Dendritic cell treated with granulocyte-macrophage colony-stimulating factor and Interleukin-4, amounts not matched to agents 40 ng/mL and 50 ng/mL, for 4 days (primary cell): ENCODE measurements at regions of chr15 and their contacts with region 1.

Region 1: DNA sequence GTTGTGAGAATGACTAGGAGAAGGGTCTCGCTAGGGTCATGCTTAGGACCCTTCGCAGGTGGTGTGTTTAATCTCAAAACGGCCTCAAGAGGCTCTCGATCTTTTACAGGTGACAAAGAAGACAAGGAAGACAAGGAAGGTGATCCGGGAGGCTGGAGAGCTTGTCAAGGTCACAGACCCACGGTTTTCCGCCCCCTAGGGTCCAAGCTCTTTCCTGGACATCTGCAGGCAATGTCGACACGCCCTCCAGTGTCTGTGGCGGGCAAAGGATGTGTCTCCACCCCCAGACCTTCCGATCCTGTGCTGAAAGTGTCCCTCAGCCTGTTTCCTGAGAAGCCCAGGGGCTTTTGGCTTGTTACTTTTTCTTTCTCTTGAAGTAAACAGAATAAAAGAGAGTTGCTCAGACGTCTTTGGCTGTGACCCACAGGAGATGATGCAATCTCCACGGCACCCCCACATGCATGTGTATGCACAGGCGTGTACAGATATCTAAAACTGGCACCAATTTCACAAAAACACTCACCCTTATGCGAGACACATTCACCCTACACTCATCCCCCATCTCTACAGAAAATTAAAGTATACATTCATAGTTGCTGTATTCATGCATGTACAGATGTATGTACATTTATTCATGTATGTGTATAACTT is 108.8 kb downstream of the KLF13 start:
- H3K4me3 Mint-ChIP-seq: peak overlapping the region; percentile 65
- H3K27ac Mint-ChIP-seq: peak overlapping the region; percentile 94
- H3K4me1 Mint-ChIP-seq: peaks cover 83% of the 10 kb centered on the region
- H3K27me3 Mint-ChIP-seq: no peaks in the 10 kb centered on the region

Region 2: DNA sequence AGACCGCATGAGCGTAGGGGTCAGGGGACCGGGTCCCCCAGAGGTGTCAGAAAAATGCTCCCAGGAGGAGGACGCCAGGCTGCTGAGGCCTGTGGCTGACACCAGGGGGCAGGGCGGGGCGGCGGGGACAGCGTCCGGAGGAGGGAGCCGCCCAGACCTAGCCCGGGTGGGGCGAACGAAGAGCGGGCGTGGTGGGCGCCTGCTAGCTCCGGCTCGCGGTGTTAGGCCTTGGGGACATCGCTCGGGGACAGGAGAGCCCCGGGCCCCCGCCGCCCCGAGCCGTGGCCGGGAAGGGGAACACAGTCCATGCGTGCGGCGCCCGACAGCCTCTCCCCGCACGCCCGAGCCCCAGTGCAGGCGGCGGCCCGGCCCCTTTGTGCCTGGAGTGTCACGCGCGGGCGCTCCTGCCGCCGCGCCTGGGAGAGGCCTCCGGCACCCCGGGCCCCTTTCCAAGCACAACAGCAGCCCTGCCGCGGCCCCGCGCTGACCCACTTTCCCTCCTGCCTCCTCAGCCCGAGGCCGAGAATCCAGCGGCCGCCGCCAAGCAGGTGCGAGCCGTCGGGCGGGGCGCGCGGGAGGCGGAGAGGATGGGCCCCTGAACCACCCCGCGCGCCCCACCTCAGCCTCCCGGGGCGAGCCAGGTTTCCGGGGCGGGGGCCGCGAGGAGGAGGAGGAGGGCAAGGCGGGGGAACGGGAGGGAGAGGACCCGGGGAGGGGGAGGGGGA is 219.7 kb before region 1 on chr15:
- intact Hi-C with region 1: loop called (anchors 5 kb)
- H3K4me3 Mint-ChIP-seq: peak overlapping the region; percentile 86
- H3K27ac Mint-ChIP-seq: peak overlapping the region; percentile 97
- H3K4me1 Mint-ChIP-seq: peaks cover 71% of the 10 kb centered on the region
- H3K27me3 Mint-ChIP-seq: no peaks in the 10 kb centered on the region

Region 3: GRCh38 chr15:31263751-31264558 is 171.4 kb before region 1 on chr15:
- intact Hi-C with region 1: loop called (anchors 5 kb)
- H3K4me3 Mint-ChIP-seq: peak overlapping the region; percentile 17
- H3K27ac Mint-ChIP-seq: peak overlapping the region; percentile 95
- H3K4me1 Mint-ChIP-seq: peaks cover 100% of the 10 kb centered on the region
- H3K27me3 Mint-ChIP-seq: no peaks in the 10 kb centered on the region

Region 4: DNA sequence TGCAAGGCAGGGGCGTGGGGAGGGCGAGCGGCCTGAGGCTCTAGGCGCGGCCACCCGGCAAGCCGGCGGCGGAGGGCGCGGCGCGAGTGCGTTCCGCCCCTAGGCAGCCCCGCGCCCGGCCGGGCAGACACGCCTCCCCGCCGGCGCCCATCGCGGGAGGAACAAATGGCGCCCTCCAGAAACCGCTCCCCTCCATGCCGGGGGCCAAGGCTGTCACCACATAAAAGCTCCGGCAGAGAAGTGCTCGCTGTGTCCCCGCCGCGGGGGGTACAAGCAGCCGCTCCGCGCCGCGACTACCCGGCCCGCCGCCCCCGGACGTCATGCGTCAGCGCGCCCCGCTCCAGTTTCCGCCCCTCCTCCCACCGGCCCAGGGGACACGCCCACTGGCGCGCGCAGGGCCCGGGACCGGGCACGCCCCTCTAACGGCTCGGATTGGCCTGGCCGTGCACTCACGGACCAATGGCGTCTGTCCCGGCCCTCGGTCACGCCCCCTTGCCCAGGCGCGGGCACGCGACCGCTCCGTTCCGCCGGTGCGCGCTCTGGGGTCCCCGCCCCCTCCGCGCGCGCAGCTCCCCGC is 109.1 kb before region 1 on chr15:
- intact Hi-C with region 1: loop called (anchors 2 kb)
- H3K4me3 Mint-ChIP-seq: peak overlapping the region; percentile 94
- H3K27ac Mint-ChIP-seq: peak overlapping the region; percentile 97
- H3K4me1 Mint-ChIP-seq: peaks cover 59% of the 10 kb centered on the region
- H3K27me3 Mint-ChIP-seq: no peaks in the 10 kb centered on the region

Region 5: DNA sequence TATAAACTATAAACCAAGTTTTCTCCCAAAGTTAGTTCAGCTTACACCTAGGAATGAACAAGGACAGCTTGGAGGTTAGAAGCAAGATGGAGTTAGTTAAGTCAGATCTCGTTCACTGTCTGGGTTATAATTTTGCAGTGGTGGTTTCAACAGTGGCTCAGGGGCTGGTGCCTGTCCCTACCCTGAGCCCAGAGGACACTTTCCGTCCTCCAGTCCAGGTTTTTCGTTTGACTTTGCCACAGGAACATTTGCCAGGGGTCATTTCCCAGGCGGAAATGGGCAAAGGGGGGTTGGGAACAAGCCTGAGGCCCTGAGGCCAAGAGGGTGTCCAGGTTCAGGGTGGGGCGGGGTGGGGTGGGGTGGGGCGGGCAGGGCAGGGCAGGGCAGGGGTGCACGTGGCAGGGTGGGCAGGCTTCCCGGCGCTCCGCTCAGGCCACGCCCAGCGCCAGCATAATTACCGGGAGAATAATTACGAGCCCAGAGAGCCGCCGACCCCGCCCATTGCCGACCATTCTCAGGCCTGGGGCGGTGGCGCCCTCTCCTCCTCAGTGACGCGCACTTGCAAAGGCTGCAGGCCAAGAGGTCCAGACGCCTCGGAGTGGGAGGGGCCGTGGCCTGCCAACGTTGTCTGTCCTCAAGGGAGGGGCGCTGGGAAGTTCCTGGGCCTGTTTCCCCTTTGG is 38.4 kb before region 1 on chr15:
- intact Hi-C with region 1: loop called (anchors 5 kb)
- H3K4me3 Mint-ChIP-seq: peak overlapping the region; percentile 23
- H3K27ac Mint-ChIP-seq: peak overlapping the region; percentile 64
- H3K4me1 Mint-ChIP-seq: peaks cover 65% of the 10 kb centered on the region
- H3K27me3 Mint-ChIP-seq: peaks cover 27% of the 10 kb centered on the region

Region 6: DNA sequence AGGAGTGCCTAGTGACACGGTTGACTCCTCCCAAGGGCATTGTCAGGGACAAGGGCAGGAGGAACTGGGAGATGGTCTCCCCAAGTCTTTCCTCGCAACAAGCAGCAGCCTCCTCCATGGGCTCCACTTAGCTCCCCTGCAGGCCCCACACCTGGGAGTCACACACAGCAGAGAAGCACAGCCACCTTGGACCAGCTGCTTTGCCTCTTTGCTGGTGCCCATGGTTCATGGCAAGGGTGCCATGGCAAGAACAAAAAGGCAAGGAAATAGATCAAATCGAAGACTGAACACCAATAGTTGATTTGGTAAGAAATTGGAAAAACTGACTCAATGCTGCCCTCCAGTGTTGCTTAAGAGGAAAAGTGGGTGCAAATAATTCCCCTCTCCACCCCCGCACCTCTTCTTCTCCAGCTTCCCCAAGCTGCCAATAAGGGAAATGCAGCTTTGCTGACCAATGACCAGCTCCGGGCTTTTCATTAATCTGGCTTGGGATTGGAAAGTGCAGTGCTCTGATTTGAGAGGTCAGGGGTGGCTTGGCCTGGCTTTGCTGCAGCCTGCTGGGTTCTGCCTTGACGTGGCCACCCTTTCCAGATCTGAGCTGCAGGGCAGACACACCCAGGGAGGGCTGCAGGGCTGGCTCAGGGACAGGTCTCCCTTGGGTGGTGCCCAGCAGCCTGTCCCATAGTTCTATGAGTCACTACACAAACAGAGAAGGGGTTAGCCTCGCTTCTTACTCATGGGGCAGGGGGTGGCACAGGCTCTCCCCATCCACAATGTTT is 53.2 kb after region 1 on chr15:
- intact Hi-C with region 1: loop called (anchors 1 kb)
- H3K4me3 Mint-ChIP-seq: no peak overlapping the region
- H3K27ac Mint-ChIP-seq: peak overlapping the region; percentile 15
- H3K4me1 Mint-ChIP-seq: peaks cover 25% of the 10 kb centered on the region
- H3K27me3 Mint-ChIP-seq: peaks cover 45% of the 10 kb centered on the region

Region 7: DNA sequence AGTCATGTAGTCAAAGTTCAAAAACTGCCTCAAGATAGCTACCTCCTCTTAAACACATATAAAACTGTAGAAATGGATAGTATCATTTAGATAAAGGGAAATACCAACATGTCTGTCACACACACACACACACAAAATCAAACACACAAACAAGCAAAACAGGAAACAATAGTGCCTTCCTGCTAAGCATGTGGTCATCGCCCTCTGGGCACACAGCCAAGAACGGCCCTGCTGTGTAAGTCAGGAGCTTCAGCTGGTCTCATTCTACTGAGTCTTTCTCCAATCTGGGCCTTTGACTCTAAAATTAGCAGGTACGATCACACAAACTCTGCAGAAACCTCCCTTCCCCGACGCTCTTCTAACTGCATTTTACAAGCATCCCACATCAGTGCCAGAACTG is 322.7 kb after region 1 on chr15:
- intact Hi-C with region 1: no loop called
- H3K4me3 Mint-ChIP-seq: no peak overlapping the region
- H3K27ac Mint-ChIP-seq: no peak overlapping the region
- H3K4me1 Mint-ChIP-seq: peaks cover 6% of the 10 kb centered on the region
- H3K27me3 Mint-ChIP-seq: peaks cover 1% of the 10 kb centered on the region